Esophagus squamous epithelium (tissue), 5 donors: ENCODE measurements at regions of chr21 and their contacts with region 1.

Region 1: DNA sequence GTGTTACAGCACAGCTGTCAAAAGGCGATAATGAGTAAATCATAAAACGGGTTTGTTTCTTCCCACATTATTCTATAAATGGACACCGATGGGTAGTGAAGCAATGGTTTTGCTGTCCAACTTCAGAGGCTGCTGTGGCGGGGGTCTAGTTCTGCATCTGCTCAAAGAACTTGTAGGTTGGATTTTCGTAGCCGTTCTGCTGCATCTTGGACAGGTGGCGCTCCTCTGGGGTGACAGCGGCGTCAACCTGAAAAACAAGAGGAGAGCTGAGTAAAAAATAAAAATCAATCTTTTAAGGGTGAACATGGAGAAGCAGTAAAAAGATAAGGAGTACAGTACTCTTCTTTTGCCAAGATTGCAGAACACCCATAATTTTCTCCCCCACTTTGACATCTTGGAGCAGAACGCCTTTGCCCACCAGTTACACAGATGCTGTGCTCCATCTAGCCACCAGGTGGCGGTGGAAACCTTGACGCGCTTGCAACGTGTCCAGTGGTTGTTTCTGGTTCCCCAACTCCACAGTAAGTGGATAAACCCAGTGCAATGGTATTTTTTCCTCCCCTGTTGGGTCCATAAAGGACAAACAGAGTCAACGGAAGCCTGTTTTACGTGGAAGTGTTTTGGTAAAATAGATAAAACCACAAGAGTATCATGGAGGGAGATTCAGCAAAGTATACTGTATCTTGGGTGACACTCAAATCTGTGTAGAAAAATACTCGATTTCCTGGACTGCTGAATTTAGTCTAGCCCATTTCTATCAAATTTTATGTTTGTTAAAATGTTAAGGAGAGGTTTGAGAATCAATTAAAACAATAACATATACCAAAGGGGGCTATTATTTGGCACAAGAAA is 147.0 kb downstream of the GABPA start:
- DNase-seq: no peak
- H3K4me3 ChIP-seq: no peak overlapping the region
- H3K27ac ChIP-seq: no peak overlapping the region
- H3K4me1 ChIP-seq: no peaks in the 10 kb centered on the region
- H3K27me3 ChIP-seq: no peaks in the 10 kb centered on the region
- CTCF ChIP-seq: peak; percentile 57 to 97 (median 86)
- POLR2A ChIP-seq: no peak

Region 2: DNA sequence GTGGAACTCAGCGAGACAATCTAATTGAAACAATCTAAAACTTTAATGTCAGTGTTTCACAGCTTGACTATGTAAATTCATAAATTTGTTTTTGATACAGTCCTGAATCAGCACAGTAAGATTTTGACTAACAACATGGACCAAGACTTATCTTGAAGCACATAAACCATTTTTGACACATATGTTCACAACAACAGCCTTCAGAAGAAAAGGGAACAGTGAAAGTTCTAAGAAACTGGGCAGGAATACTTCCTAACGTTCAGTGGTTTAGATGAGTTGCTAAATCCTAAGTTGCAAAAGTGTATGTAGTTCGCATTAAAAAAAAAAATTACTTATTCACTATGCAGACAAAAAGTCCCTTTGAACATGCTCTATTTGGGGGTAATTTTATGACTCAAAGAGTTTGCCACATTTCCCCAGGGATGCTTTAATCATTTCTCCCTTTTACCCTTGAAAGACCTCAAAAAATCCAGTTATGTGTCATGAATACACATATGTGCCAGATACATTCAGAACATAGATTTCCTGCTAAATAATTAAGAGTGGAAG is 394.6 kb before region 1 on chr21:
- intact Hi-C with region 1: no loop called
- DNase-seq: no peak
- H3K4me3 ChIP-seq: no peak overlapping the region
- H3K27ac ChIP-seq: no peak overlapping the region
- H3K4me1 ChIP-seq: no peaks in the 10 kb centered on the region
- H3K27me3 ChIP-seq: no peaks in the 10 kb centered on the region
- CTCF ChIP-seq: no peak
- POLR2A ChIP-seq: no peak

Region 3: GRCh38 chr21:25589887-25590286 is 291.9 kb before region 1 on chr21:
- intact Hi-C with region 1: no loop called
- DNase-seq: no peak
- H3K4me3 ChIP-seq: no peak overlapping the region
- H3K27ac ChIP-seq: no peak overlapping the region
- H3K4me1 ChIP-seq: no peaks in the 10 kb centered on the region
- H3K27me3 ChIP-seq: no peaks in the 10 kb centered on the region
- CTCF ChIP-seq: no peak
- POLR2A ChIP-seq: no peak

Region 4: GRCh38 chr21:26170471-26171257 is 288.9 kb after region 1 on chr21 and contains the start of gene APP:
- intact Hi-C with region 1: loop called (anchors 5 kb)
- DNase-seq: peak; percentile 7
- H3K4me3 ChIP-seq: peak within 1 kb of the TSS; percentile 77 to 96 (median 92)
- H3K27ac ChIP-seq: peak within 1 kb of the TSS; percentile 88 to 94 (median 90)
- H3K4me1 ChIP-seq: peaks cover 12 to 45% (median 12%) of the 10 kb centered on the region in 3 donors
- H3K27me3 ChIP-seq: no peaks in the 10 kb centered on the region
- CTCF ChIP-seq: peak; percentile 76 to 99 (median 98)
- POLR2A ChIP-seq: peak in 3 of 4 donors; percentile 77 to 92 (median 80)
- total RNA-seq, gene APP: 58.2 to 277 (median 183) TPM